ENCODE measurements at regions of chr1 and their contacts with region 1.

Region 1: DNA sequence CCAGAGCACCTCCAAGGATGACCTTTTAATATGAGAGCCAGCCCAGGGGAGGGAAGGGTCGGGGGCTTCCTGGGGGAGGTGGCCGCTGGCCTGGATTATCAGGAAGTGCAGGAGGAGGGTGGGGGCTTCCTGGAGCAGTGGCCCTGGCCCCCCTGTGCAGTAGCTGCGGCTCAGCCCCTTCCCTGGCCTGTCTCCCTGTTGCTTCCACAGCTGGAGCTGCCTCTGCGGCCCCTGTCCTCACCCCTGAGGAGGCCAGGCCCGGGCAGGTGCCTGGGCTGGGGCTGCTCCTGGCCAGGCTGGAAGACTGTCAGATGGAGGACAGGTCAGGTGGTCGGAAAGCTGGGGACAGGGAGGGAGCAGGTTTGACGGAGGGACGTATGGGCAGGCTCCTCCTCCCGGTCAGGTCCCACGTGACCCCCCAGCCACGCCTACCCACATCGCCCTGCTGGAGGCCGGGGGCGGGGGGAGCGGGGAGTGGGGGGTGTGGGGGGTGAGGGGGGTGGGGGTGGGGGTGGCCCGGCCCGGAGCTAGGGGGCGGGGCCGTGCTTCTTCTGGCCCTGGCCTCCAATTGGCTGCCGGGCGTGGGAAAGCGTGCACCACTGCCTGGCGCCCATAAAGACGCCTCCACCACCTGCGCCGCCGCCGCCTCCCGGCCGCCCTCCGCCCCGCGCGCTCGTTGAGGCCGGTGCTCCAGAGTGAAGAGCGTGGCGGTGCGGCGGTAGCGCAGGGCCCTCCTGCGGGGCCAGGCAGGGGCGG is 10.2 kb upstream of the TNFRSF14 start:
- DNase-seq: peak; percentile 93
- ATAC-seq: peak; percentile 58
- H3K4me3 Mint-ChIP-seq: peak overlapping the region; percentile 72
- H3K27ac Mint-ChIP-seq: no peak overlapping the region
- H3K4me1 Mint-ChIP-seq: peaks cover 5% of the 10 kb centered on the region; the same call in 1 of the 2 replicates
- H3K27me3 Mint-ChIP-seq: peaks cover 13% of the 10 kb centered on the region
- CTCF ChIP-seq: no peak

Region 2: GRCh38 chr1:2525920-2526823 is 19.8 kb before region 1 on chr1 and contains the start of gene PANK4:
- CTCF ChIA-PET with region 1: interaction called, 61 read pairs
- POLR2A ChIA-PET with region 1: interaction called, 6 read pairs
- DNase-seq: peak; percentile 91
- ATAC-seq: peak; percentile 86
- H3K4me3 Mint-ChIP-seq: peak within 1 kb of the TSS; percentile 83
- H3K27ac Mint-ChIP-seq: peak within 1 kb of the TSS; percentile 92; the same call in 1 of the 2 replicates
- H3K4me1 Mint-ChIP-seq: peaks cover 28% of the 10 kb centered on the region
- H3K27me3 Mint-ChIP-seq: peaks cover 44% of the 10 kb centered on the region
- CTCF ChIP-seq: no peak
- total RNA-seq, gene PANK4: 35.2 to 52.5 TPM (median 36.7 TPM) in 3 replicates

Region 3: DNA sequence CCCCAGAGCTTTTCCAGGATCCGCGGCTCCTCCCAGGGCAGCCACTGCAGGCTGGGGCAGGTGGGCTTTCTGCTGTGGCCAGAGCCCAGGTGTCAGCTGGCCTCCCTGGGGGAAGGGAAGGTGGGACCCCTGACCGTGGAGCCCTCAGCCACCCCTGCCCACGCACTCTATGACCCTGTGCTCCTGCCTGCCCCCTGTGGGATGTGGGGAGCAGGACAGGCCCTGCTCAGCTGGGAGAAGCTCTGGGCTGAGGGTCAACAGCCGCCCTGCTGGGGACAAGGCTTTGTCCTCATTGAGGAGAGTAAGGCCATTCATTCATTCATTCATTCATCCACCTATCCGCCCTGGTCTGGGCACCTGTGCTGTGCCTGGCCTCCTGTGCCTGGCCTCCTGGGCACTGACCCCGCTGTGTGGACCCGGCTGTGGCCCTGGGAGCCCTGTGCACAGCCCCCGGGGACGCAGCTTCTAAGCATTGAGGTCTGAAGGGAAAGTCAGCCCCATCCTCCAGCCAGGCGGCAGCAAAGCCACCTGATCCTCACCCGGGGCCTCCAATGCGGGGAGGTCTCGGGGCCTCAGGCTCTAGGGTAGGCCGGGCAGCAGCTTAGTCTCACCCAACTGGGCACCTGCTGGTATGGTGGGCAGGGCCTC is 16.1 kb after region 1 on chr1:
- CTCF ChIA-PET with region 1: interaction called, 12 read pairs
- POLR2A ChIA-PET with region 1: interaction called, 3 read pairs
- DNase-seq: peak; percentile 56
- ATAC-seq: peak; percentile 83
- H3K4me3 Mint-ChIP-seq: no peak overlapping the region
- H3K27ac Mint-ChIP-seq: no peak overlapping the region
- H3K4me1 Mint-ChIP-seq: 0 out of 2 replicates have a peak, but pooled peaks cover 3% of the 10 kb centered on the region
- H3K27me3 Mint-ChIP-seq: no peaks in the 10 kb centered on the region
- CTCF ChIP-seq: peak; percentile 51; the same call in 1 of the 2 replicates

Region 4: GRCh38 chr1:2617971-2618470 is 72.1 kb after region 1 on chr1:
- CTCF ChIA-PET with region 1: no interaction called
- POLR2A ChIA-PET with region 1: no interaction called
- DNase-seq: no peak
- ATAC-seq: no peak
- H3K4me3 Mint-ChIP-seq: no peak overlapping the region
- H3K27ac Mint-ChIP-seq: no peak overlapping the region
- H3K4me1 Mint-ChIP-seq: peaks cover 5% of the 10 kb centered on the region
- H3K27me3 Mint-ChIP-seq: peaks cover 40% of the 10 kb centered on the region
- CTCF ChIP-seq: no peak